ENCODE measurements at regions of chr1 and their contacts with region 1.

Region 1: GRCh38 chr1:154198756-154199562 is 7.1 kb upstream of the TPM3 start:
- DNase-seq: no peak
- H3K4me3 ChIP-seq: no peak overlapping the region
- H3K27ac ChIP-seq: no peak overlapping the region
- H3K4me1 ChIP-seq: no peaks in the 10 kb centered on the region
- H3K27me3 ChIP-seq: peaks cover 9% of the 10 kb centered on the region
- CTCF ChIP-seq: peak; percentile 74

Region 2: GRCh38 chr1:154158307-154159125 is 40.4 kb before region 1 on chr1:
- CTCF ChIA-PET with region 1: no interaction called
- POLR2A ChIA-PET with region 1: no interaction called
- intact Hi-C with region 1: no loop called
- DNase-seq: no peak
- H3K4me3 ChIP-seq: no peak overlapping the region
- H3K27ac ChIP-seq: 0 out of 2 replicates have a peak overlapping the region, but pooled peaks have one; percentile 2
- H3K4me1 ChIP-seq: no peaks in the 10 kb centered on the region
- H3K27me3 ChIP-seq: no peaks in the 10 kb centered on the region
- CTCF ChIP-seq: no peak

Region 3: DNA sequence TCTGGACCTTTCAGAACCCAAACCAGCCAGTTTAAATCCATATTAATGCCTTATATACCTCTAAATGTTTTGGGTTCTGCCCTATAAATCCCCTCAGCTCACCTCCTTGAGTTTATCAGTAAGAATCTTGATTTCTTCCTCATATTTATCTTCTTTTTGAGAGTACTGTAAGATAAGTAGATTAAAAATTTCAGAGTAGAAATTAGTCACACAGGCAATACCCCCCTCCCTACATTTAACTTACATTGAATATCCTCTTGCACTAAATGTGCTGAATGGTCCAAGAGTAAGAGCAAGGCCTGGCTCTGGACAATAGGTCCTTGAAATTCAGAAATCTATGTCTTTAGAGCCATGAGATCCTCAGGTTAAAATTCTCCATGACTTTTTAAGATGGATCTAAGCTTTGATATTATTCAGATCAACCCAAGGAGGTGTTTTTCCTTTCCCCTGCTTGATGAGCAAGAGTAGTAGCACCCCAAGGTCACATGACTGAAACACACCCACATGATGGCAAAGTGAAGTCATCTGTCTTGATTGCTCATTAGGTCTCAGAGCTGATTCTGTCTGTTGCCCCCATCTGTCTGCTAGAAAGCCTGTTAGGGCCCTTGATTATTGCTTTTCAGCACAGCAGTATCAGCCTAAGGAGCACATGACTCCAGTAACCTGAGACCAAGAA is 28.3 kb before region 1 on chr1:
- CTCF ChIA-PET with region 1: no interaction called
- POLR2A ChIA-PET with region 1: no interaction called
- intact Hi-C with region 1: no loop called
- DNase-seq: no peak
- H3K4me3 ChIP-seq: no peak overlapping the region
- H3K27ac ChIP-seq: no peak overlapping the region
- H3K4me1 ChIP-seq: no peaks in the 10 kb centered on the region
- H3K27me3 ChIP-seq: no peaks in the 10 kb centered on the region
- CTCF ChIP-seq: no peak

Region 4: DNA sequence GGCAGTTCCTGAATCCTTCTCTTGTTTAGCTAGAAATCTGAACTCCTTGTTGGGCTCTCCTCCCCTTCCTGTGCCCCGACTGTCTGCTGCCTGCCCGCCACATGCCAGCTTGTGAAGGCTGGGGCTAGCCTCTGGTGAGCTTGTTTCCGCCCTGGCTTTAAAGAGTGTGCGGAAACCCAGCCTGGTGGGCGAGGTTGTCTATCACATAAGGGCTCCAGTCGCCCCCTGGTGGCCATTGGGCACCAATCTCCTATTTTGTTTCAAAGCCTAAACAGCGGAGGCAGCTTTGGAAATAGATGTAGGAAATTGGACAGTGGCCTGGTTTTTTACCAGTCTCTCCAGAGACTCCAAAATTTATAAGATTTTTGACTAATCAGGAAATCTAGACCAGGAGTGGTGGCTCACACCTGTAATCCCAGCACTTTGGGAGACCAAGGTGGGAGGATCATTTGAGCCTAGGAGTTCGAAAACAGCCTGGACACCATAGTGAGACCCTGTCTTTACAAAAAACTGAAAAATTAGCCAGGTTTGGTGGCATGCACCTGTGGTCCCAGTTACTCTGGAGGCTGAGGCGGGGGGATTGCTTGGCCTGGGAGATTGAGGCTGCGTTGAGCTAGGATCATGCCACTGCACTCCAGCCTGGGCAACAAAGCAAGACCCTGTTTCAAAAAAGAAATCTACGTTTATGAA is 136.2 kb after region 1 on chr1:
- CTCF ChIA-PET with region 1: interaction called, 6 read pairs
- POLR2A ChIA-PET with region 1: no interaction called
- intact Hi-C with region 1: loop called (anchors 5 kb)
- DNase-seq: peak in 1 of 2 experiments; percentile 66
- H3K4me3 ChIP-seq: no peak overlapping the region
- H3K27ac ChIP-seq: no peak overlapping the region
- H3K4me1 ChIP-seq: no peaks in the 10 kb centered on the region
- H3K27me3 ChIP-seq: peaks cover 78% of the 10 kb centered on the region
- CTCF ChIP-seq: peak; percentile 90